ENCODE measurements at regions of chr6 and their contacts with region 1.

Region 1: GRCh38 chr6:10478187-10479040 is 42.7 kb upstream of the GCNT2 start:
- DNase-seq: no peak
- H3K4me3 ChIP-seq: no peak overlapping the region
- H3K27ac ChIP-seq: no peak overlapping the region
- H3K4me1 ChIP-seq: no peaks in the 10 kb centered on the region
- H3K27me3 ChIP-seq: peaks cover 0 to 4% (median 0%) of the 10 kb centered on the region in 4 donors
- CTCF ChIP-seq: peak; percentile 54 to 64 (median 61)
- EP300 ChIP-seq: no peak
- POLR2A ChIP-seq: no peak

Region 2: GRCh38 chr6:10800829-10801535 is 322.6 kb after region 1 on chr6:
- intact Hi-C with region 1: loop called (anchors 2 kb)
- DNase-seq: no peak
- H3K4me3 ChIP-seq: no peak overlapping the region
- H3K27ac ChIP-seq: no peak overlapping the region
- H3K4me1 ChIP-seq: no peaks in the 10 kb centered on the region
- H3K27me3 ChIP-seq: no peaks in the 10 kb centered on the region
- CTCF ChIP-seq: peak in 2 of 3 experiments; percentile 92 to 98
- EP300 ChIP-seq: no peak
- POLR2A ChIP-seq: no peak

Measured in esophagus muscularis mucosa (tissue), 4 donors.